Activated naive CD4-positive, alpha-beta T cell treated with anti-CD3 and anti-CD28 coated beads for 36 hours (primary cell): ENCODE measurements at regions of chr1 and their contacts with region 1.

Region 1: GRCh38 chr1:86380257-86380861 is 15.8 kb downstream of the ODF2L start:
- DNase-seq: peak; percentile 18
- H3K4me3 Mint-ChIP-seq: no peak overlapping the region
- H3K27ac Mint-ChIP-seq: no peak overlapping the region
- H3K4me1 Mint-ChIP-seq: peaks cover 8% of the 10 kb centered on the region
- H3K27me3 Mint-ChIP-seq: no peaks in the 10 kb centered on the region

Region 2: DNA sequence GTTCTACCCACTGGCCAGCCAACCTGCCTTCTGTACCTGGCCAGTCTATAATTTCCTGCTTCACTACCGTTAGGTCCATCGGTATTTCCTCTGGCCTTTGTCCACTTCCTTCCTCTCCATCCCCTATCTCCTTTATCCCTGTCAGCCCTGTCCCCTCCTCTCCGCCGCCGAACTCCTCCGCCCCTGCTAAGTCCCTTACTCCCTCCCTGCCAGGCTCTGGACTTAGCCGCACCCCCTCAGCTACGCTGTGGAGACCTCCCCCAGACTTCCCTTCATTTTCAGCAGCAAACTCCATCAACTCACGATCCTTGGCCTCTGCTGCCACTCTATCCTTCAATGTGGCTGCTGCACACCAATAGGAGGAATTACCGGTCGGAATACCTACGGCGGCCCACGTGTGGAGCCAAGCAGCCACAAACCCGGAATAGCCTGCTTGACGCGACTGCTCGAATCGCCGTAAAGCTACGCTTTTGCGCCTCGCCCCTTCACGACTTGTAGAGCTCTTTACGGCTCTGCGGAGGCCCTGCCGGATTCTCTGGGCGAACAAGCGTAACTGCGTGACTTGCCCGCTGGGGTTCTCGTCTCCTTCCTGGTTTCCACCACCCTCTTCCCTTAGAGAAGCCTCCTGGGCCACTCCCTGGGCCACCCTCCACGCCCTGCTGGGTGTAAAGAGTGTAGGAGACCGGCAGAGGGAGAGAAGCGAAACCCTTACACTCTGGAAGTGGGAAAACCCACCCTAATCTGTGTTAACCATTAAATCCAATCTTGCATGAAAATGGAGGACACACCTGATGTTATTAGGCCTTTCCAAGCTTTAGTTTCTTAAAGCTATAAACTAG is 672.1 kb before region 1 on chr1 and contains the start of gene ZNHIT6:
- CTCF ChIA-PET with region 1: no interaction called
- intact Hi-C with region 1: loop called (anchors 10 kb)
- DNase-seq: peak; percentile 93
- H3K4me3 Mint-ChIP-seq: no peak within 1 kb of the TSS
- H3K27ac Mint-ChIP-seq: no peak within 1 kb of the TSS
- H3K4me1 Mint-ChIP-seq: peaks cover 21% of the 10 kb centered on the region
- H3K27me3 Mint-ChIP-seq: no peaks in the 10 kb centered on the region
- total RNA-seq, gene ZNHIT6: 19.8 to 19.9 TPM

Region 3: DNA sequence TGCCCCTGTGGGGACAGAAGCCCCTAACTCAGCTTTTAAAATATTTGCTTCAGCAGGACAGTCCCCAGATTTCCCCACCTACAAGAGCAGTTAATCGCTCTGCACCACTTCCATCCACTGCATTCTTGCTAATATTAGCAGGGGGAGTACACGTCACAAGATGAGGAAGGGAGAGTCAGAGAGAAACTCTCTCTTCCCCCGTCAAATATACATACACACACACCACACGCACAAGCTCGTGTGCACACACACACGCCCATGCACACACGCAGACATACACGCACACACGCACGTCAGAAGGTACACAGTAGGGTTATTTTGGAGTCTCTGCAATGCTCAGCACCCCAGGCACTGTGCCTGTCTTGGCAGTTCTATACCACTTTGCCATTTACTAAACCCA is 90.5 kb after region 1 on chr1:
- CTCF ChIA-PET with region 1: interaction called, 8 read pairs
- intact Hi-C with region 1: loop called (anchors 1 kb)
- DNase-seq: no peak
- H3K4me3 Mint-ChIP-seq: no peak overlapping the region
- H3K27ac Mint-ChIP-seq: no peak overlapping the region
- H3K4me1 Mint-ChIP-seq: no peaks in the 10 kb centered on the region
- H3K27me3 Mint-ChIP-seq: peaks cover 1% of the 10 kb centered on the region

Region 4: DNA sequence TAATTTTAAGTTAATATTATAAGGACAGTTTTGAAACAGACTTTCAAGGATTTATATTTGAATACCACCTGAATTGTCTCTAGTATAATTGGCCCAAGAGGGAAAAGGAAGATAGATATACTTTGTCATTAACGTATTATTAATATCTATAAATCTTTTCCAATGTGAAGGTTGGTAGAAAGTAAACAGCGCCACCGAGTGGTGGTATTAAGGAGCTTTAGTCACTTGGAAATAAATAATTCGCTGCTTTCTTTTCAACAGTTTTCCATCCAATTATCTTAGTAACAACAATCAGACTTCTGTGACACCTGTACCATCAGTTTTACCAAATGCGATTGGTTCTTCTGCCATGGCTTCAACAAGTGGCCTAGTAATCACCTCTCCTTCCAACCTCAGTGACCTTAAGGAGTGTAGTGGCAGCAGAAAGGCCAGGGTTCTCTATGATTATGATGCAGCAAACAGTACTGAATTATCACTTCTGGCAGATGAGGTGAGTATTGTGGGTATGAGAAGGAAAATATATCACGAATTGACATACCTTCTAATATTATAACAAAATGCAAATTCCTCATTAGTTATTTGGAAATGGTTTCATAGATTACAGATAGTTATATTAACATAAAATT is 361.7 kb after region 1 on chr1:
- CTCF ChIA-PET with region 1: no interaction called
- intact Hi-C with region 1: loop called (anchors 2 kb)
- DNase-seq: peak; percentile 55
- H3K4me3 Mint-ChIP-seq: no peak overlapping the region
- H3K27ac Mint-ChIP-seq: no peak overlapping the region
- H3K4me1 Mint-ChIP-seq: no peaks in the 10 kb centered on the region
- H3K27me3 Mint-ChIP-seq: no peaks in the 10 kb centered on the region

Region 5: DNA sequence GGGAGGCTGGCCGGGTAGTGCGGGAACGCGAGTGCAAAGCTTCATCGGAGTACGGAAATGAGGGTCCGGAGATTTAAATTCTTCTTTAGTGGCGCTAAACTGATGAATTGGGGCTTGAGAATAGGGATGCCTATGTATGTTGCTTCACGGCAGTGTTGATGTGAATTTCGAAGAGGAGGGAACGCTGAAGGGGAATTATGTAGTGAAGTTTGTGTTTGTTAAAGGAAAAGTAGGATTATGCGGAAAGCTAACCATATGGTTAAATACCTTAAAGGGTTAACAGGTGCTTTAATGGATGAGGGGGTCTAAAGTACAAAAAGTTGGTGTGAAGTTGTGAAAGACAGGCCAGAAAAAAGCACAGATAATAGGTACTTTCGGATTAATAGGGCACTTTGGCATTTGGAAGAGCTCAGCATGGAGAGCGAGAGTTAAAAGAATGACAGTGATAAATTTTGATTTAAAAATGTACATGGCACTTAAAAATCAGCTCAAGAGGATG is 535.4 kb after region 1 on chr1:
- CTCF ChIA-PET with region 1: no interaction called
- intact Hi-C with region 1: no loop called
- DNase-seq: no peak
- H3K4me3 Mint-ChIP-seq: no peak overlapping the region
- H3K27ac Mint-ChIP-seq: no peak overlapping the region
- H3K4me1 Mint-ChIP-seq: peaks cover 30% of the 10 kb centered on the region
- H3K27me3 Mint-ChIP-seq: no peaks in the 10 kb centered on the region

Region 6: GRCh38 chr1:87039096-87039495 is 658.7 kb after region 1 on chr1:
- CTCF ChIA-PET with region 1: no interaction called
- intact Hi-C with region 1: loop called (anchors 5 kb)
- DNase-seq: no peak
- H3K4me3 Mint-ChIP-seq: no peak overlapping the region
- H3K27ac Mint-ChIP-seq: no peak overlapping the region
- H3K4me1 Mint-ChIP-seq: peaks cover 17% of the 10 kb centered on the region
- H3K27me3 Mint-ChIP-seq: no peaks in the 10 kb centered on the region